IMR-90 (cell line): ENCODE measurements at regions of chr4 and their contacts with region 1.

Region 1: DNA sequence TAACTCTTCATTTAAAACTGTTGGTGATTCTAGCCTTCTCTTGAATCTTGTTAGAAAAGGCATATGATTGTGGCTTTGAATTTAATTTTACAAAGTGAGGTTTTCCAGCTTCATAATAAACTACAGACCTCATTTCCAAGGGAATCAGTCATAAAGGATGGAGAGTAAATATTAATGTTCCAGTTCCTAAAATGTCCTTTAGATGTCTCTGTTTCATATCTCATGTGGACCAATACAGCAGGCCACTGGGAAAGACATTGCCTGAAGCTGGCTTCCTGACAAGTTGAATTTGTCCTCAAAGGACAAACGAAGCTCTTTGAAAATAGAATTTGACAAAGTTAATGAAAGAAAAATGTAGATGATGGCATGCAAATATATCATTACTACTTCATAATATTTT is 125.4 kb downstream of the ZNF330 start:
- DNase-seq: peak; percentile 74
- ATAC-seq: peak; percentile 69
- H3K4me3 ChIP-seq: no peak overlapping the region
- H3K27ac ChIP-seq: no peak overlapping the region
- H3K4me1 ChIP-seq: peaks cover 7% of the 10 kb centered on the region
- H3K27me3 ChIP-seq: no peaks in the 10 kb centered on the region
- CTCF ChIP-seq: peak; percentile 74
- POLR2A ChIP-seq: no peak
- RAD21 ChIP-seq: peak; percentile 87

Region 2: DNA sequence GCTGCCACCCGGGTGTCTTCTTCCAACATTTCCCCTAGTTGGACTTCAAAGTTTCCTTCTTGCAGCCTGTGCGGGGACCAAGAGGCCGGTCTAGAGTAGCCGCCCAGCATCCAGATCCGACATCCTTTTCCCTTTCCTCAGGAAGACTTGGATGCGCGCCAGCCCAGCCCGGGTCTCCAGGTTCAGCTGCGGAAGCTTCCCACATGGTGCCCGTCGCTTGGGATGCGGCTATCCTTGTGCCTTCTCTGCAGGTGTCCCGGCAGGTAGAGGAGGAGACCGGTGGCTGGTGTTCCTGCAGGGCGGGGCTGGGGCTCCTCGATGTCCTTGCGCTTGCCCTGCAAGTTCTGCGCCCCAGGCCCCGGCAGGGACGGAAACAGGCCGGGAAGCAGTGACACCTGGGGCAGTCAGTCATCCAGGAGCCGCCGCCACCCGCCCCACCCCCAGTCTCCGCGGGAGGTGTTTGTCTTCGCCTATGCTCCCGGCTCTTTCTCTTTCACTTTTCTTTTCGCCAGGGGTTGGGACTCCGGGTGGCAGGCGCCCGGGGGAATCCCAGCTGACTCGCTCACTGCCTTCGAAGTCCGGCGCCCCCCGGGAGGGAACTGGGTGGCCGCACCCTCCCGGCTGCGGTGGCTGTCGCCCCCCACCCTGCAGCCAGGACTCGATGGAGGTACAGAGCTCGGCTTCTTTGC is 290.1 kb after region 1 on chr4 and contains the start of gene IL15:
- CTCF ChIA-PET with region 1: interaction called, 6 read pairs
- POLR2A ChIA-PET with region 1: no interaction called
- dilution Hi-C with region 1: no loop called
- in situ Hi-C with region 1: no loop called
- intact Hi-C with region 1: loop called (anchors 1 kb)
- DNase-seq: peak; percentile 58
- ATAC-seq: peak; percentile 77
- H3K4me3 ChIP-seq: peak within 1 kb of the TSS; percentile 85
- H3K27ac ChIP-seq: peak within 1 kb of the TSS; percentile 84
- H3K4me1 ChIP-seq: no peaks in the 10 kb centered on the region
- H3K27me3 ChIP-seq: no peaks in the 10 kb centered on the region
- CTCF ChIP-seq: no peak
- POLR2A ChIP-seq: no peak
- RAD21 ChIP-seq: no peak
- total RNA-seq, gene IL15: 5.2 and 5.8 TPM in 2 replicates

Region 3: DNA sequence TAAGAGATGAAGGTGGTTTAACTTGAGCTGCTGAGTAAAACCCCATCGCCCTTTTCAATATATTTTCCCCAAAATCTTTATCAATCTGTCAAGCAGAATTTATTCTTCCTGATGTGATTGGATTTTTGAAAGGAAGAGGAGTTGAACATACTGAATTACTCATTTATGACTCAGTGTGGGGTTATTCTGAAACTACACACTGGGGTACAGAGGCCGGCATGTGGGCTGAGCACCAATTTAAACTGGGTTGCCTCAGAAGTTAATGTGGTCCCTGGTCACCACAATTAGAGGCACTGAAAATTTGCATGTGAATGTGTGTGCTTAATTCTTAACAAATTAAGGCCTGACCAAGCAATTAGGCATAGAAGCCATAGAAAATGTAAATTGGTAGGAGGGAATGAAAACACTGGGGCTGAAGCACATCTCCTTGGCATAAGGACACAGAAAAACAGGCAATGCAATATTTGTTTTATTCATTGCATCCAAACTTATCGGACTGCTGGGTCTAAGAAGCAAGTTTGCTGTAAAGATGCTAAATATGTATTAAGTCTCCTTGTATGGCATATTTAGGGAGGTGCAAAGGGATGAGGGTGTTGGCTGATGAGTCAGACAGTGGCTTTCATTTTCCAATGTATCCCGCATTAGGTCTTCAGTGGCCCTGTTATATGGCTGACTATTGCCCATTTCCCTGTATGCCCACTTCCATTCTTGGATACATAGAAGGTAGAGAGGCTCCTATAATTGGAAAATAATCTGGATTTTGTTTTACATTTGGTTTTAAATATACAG is 461.2 kb after region 1 on chr4:
- CTCF ChIA-PET with region 1: interaction called, 3 read pairs
- POLR2A ChIA-PET with region 1: no interaction called
- dilution Hi-C with region 1: no loop called
- in situ Hi-C with region 1: no loop called
- intact Hi-C with region 1: loop called (anchors 10 kb)
- DNase-seq: peak; percentile 68
- ATAC-seq: peak; percentile 59
- H3K4me3 ChIP-seq: no peak overlapping the region
- H3K27ac ChIP-seq: no peak overlapping the region
- H3K4me1 ChIP-seq: peaks cover 6% of the 10 kb centered on the region
- H3K27me3 ChIP-seq: no peaks in the 10 kb centered on the region
- CTCF ChIP-seq: no peak
- POLR2A ChIP-seq: no peak
- RAD21 ChIP-seq: no peak

Region 4: GRCh38 chr4:142095886-142096605 is 749.9 kb after region 1 on chr4:
- CTCF ChIA-PET with region 1: interaction called, 5 read pairs
- POLR2A ChIA-PET with region 1: no interaction called
- dilution Hi-C with region 1: no loop called
- in situ Hi-C with region 1: loop called (anchors 25 kb)
- intact Hi-C with region 1: loop called (anchors 10 kb)
- DNase-seq: peak; percentile 96
- ATAC-seq: peak; percentile 53
- H3K4me3 ChIP-seq: no peak overlapping the region
- H3K27ac ChIP-seq: no peak overlapping the region
- H3K4me1 ChIP-seq: peaks cover 9% of the 10 kb centered on the region
- H3K27me3 ChIP-seq: no peaks in the 10 kb centered on the region
- CTCF ChIP-seq: no peak
- POLR2A ChIP-seq: no peak
- RAD21 ChIP-seq: no peak

Region 5: GRCh38 chr4:142126890-142127497 is 780.9 kb after region 1 on chr4:
- CTCF ChIA-PET with region 1: no interaction called
- POLR2A ChIA-PET with region 1: no interaction called
- dilution Hi-C with region 1: no loop called
- in situ Hi-C with region 1: loop called (anchors 25 kb)
- intact Hi-C with region 1: loop called (anchors 2 kb)
- DNase-seq: peak; percentile 80
- ATAC-seq: peak; percentile 80
- H3K4me3 ChIP-seq: no peak overlapping the region
- H3K27ac ChIP-seq: no peak overlapping the region
- H3K4me1 ChIP-seq: peaks cover 5% of the 10 kb centered on the region
- H3K27me3 ChIP-seq: no peaks in the 10 kb centered on the region
- CTCF ChIP-seq: peak; percentile 85
- POLR2A ChIP-seq: no peak
- RAD21 ChIP-seq: peak; percentile 95

Region 6: GRCh38 chr4:142347241-142347640 is 1001.1 kb after region 1 on chr4:
- CTCF ChIA-PET with region 1: no interaction called
- POLR2A ChIA-PET with region 1: no interaction called
- dilution Hi-C with region 1: no loop called
- in situ Hi-C with region 1: no loop called
- intact Hi-C with region 1: loop called (anchors 10 kb)
- DNase-seq: peak; percentile 62
- ATAC-seq: no peak
- H3K4me3 ChIP-seq: no peak overlapping the region
- H3K27ac ChIP-seq: no peak overlapping the region
- H3K4me1 ChIP-seq: peaks cover 2% of the 10 kb centered on the region; the same call in 1 of the 2 replicates
- H3K27me3 ChIP-seq: no peaks in the 10 kb centered on the region
- CTCF ChIP-seq: no peak
- POLR2A ChIP-seq: no peak
- RAD21 ChIP-seq: no peak